CD8-positive, alpha-beta T cell (primary cell): ENCODE measurements at regions of chr2 and their contacts with region 1.

Region 1: DNA sequence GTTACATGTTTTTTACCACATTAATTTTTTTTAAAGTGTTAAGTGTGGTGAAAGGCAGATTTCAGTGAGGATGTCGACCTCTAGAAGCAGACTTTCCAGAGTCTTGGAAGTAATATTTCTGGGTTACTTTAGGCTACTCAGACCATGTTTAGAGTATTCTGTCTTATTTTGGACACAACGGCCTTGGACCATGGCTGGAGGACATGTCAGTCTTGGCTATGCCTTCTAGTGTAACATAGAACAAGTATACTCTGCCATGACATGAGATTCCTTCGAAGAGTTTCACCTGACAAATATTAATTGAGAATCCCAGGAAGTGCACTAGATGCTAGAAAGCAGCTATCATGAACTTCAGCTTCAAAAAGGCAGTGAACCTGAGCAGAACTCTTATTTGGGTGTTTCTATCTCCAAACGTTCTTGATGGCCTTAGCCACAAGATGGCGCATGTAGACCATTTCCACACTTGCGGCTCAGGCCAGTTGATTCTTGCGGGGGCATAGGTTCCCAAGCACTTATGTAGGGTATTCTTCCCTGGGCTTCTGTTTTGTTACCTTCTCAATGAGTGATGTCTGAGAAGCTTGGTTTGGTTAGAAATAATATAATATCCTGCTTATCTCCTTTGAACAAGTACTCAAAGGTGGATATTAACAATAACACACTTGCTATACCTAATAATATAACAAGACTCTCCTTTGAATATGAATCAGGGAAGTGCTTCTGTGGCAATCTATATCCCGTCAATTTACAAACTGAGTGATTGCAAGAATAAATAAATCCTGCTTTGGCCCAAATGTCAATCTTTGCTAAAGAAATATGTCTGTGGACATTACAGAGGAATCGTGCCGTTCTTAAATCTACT is 62.0 kb downstream of the CACNB4 start:
- DNase-seq: peak; percentile 3 to 69 (median 49)
- ATAC-seq: peak; percentile 55
- H3K4me3 ChIP-seq: no peak overlapping the region
- H3K4me3 Mint-ChIP-seq: no peak overlapping the region
- H3K27ac ChIP-seq: no peak overlapping the region
- H3K27ac Mint-ChIP-seq: no peak overlapping the region
- H3K4me1 ChIP-seq: no peaks in the 10 kb centered on the region
- H3K4me1 Mint-ChIP-seq: no peaks in the 10 kb centered on the region
- H3K27me3 ChIP-seq: no peaks in the 10 kb centered on the region
- H3K27me3 Mint-ChIP-seq: peaks cover 3% of the 10 kb centered on the region
- CTCF ChIP-seq: peak; percentile 60

Region 2: GRCh38 chr2:151799886-151800292 is 237.0 kb before region 1 on chr2:
- CTCF ChIA-PET with region 1: no interaction called
- POLR2A ChIA-PET with region 1: no interaction called
- intact Hi-C with region 1: no loop called
- DNase-seq: no peak
- ATAC-seq: no peak
- H3K4me3 ChIP-seq: no peak overlapping the region
- H3K4me3 Mint-ChIP-seq: no peak overlapping the region
- H3K27ac ChIP-seq: no peak overlapping the region
- H3K27ac Mint-ChIP-seq: no peak overlapping the region
- H3K4me1 ChIP-seq: no peaks in the 10 kb centered on the region
- H3K4me1 Mint-ChIP-seq: no peaks in the 10 kb centered on the region
- H3K27me3 ChIP-seq: no peaks in the 10 kb centered on the region
- H3K27me3 Mint-ChIP-seq: no peaks in the 10 kb centered on the region
- CTCF ChIP-seq: no peak

Region 3: GRCh38 chr2:152025678-152026287 is 11.1 kb before region 1 on chr2:
- CTCF ChIA-PET with region 1: interaction called, 33 read pairs
- POLR2A ChIA-PET with region 1: interaction called, 3 read pairs
- intact Hi-C with region 1: no loop called
- DNase-seq: peak; percentile 58 to 83 (median 76)
- ATAC-seq: peak; percentile 93
- H3K4me3 ChIP-seq: peak overlapping the region; percentile 30 to 36
- H3K4me3 Mint-ChIP-seq: peak overlapping the region; percentile 78
- H3K27ac ChIP-seq: no peak overlapping the region
- H3K27ac Mint-ChIP-seq: no peak overlapping the region
- H3K4me1 ChIP-seq: no peaks in the 10 kb centered on the region
- H3K4me1 Mint-ChIP-seq: peaks cover 9% of the 10 kb centered on the region
- H3K27me3 ChIP-seq: no peaks in the 10 kb centered on the region
- H3K27me3 Mint-ChIP-seq: peaks cover 4% of the 10 kb centered on the region
- CTCF ChIP-seq: peak; percentile 99

Region 4: GRCh38 chr2:152046940-152047339 is 10.1 kb after region 1 on chr2:
- CTCF ChIA-PET with region 1: interaction called, 12 read pairs
- POLR2A ChIA-PET with region 1: no interaction called
- intact Hi-C with region 1: no loop called
- DNase-seq: no peak
- ATAC-seq: no peak
- H3K4me3 ChIP-seq: no peak overlapping the region
- H3K4me3 Mint-ChIP-seq: no peak overlapping the region
- H3K27ac ChIP-seq: no peak overlapping the region
- H3K27ac Mint-ChIP-seq: no peak overlapping the region
- H3K4me1 ChIP-seq: no peaks in the 10 kb centered on the region
- H3K4me1 Mint-ChIP-seq: no peaks in the 10 kb centered on the region
- H3K27me3 ChIP-seq: no peaks in the 10 kb centered on the region
- H3K27me3 Mint-ChIP-seq: no peaks in the 10 kb centered on the region
- CTCF ChIP-seq: no peak

Region 5: DNA sequence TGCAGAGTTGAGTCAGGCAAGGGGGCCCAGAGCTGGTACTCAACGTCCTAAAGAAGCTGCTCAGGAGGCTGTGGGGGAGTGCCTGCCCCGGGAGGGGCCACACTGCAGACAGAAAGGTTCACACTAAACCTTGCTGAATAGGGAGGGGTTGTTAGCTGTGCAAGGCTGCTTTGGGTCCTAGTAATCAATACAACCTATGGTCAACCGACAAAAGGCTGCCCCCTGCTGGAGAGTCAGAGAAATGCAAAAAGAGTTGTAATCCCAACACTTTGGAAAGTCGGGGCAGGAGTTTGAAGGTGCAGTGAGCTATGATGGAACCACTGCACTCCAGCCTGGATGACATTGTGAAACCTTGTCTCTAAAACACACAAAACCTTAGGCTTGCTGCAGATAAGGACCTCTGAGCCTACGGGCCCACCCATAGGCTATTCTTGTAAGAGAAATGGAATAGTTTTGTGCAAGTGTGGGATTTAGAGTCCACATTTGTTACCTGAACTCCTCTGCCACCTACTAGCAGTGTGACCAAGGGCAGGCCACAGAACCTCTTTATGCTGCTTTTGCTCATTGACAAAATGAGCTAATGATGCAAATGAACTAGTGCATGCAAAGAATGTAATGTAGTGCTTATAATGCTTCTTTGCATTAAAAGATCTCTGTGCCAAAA is 598.9 kb after region 1 on chr2:
- CTCF ChIA-PET with region 1: interaction called, 29 read pairs
- POLR2A ChIA-PET with region 1: no interaction called
- intact Hi-C with region 1: loop called (anchors 1 to 2 kb)
- DNase-seq: peak; percentile 20 to 75 (median 66)
- ATAC-seq: peak; percentile 54
- H3K4me3 ChIP-seq: no peak overlapping the region
- H3K4me3 Mint-ChIP-seq: no peak overlapping the region
- H3K27ac ChIP-seq: no peak overlapping the region
- H3K27ac Mint-ChIP-seq: no peak overlapping the region
- H3K4me1 ChIP-seq: no peaks in the 10 kb centered on the region
- H3K4me1 Mint-ChIP-seq: peaks cover 6% of the 10 kb centered on the region
- H3K27me3 ChIP-seq: no peaks in the 10 kb centered on the region
- H3K27me3 Mint-ChIP-seq: peaks cover 8% of the 10 kb centered on the region
- CTCF ChIP-seq: peak; percentile 78

Region 6: GRCh38 chr2:152740743-152741328 is 704.0 kb after region 1 on chr2:
- CTCF ChIA-PET with region 1: no interaction called
- POLR2A ChIA-PET with region 1: no interaction called
- intact Hi-C with region 1: loop called in 1 of 2 experiments (anchors 2 kb)
- DNase-seq: peak in 2 of 9 experiments; percentile 57 to 69
- ATAC-seq: peak; percentile 89
- H3K4me3 ChIP-seq: no peak overlapping the region
- H3K4me3 Mint-ChIP-seq: no peak overlapping the region
- H3K27ac ChIP-seq: no peak overlapping the region
- H3K27ac Mint-ChIP-seq: no peak overlapping the region
- H3K4me1 ChIP-seq: no peaks in the 10 kb centered on the region
- H3K4me1 Mint-ChIP-seq: peaks cover 2% of the 10 kb centered on the region
- H3K27me3 ChIP-seq: no peaks in the 10 kb centered on the region
- H3K27me3 Mint-ChIP-seq: no peaks in the 10 kb centered on the region
- CTCF ChIP-seq: peak; percentile 100

Region 7: GRCh38 chr2:153519257-153519875 is 1482.5 kb after region 1 on chr2:
- CTCF ChIA-PET with region 1: interaction called, 4 read pairs
- POLR2A ChIA-PET with region 1: no interaction called
- intact Hi-C with region 1: loop called in 1 of 2 experiments (anchors 1 kb)
- DNase-seq: peak; percentile 13 to 66 (median 50)
- ATAC-seq: no peak
- H3K4me3 ChIP-seq: no peak overlapping the region
- H3K4me3 Mint-ChIP-seq: no peak overlapping the region
- H3K27ac ChIP-seq: no peak overlapping the region
- H3K27ac Mint-ChIP-seq: no peak overlapping the region
- H3K4me1 ChIP-seq: no peaks in the 10 kb centered on the region
- H3K4me1 Mint-ChIP-seq: no peaks in the 10 kb centered on the region
- H3K27me3 ChIP-seq: no peaks in the 10 kb centered on the region
- H3K27me3 Mint-ChIP-seq: no peaks in the 10 kb centered on the region
- CTCF ChIP-seq: peak; percentile 88